ENCODE measurements at regions of chr17 and their contacts with region 1.

Region 1: GRCh38 chr17:38421171-38421841 is 7.0 kb upstream of the ARHGAP23 start:
- DNase-seq: no peak
- ATAC-seq: peak; percentile 11

Region 2: DNA sequence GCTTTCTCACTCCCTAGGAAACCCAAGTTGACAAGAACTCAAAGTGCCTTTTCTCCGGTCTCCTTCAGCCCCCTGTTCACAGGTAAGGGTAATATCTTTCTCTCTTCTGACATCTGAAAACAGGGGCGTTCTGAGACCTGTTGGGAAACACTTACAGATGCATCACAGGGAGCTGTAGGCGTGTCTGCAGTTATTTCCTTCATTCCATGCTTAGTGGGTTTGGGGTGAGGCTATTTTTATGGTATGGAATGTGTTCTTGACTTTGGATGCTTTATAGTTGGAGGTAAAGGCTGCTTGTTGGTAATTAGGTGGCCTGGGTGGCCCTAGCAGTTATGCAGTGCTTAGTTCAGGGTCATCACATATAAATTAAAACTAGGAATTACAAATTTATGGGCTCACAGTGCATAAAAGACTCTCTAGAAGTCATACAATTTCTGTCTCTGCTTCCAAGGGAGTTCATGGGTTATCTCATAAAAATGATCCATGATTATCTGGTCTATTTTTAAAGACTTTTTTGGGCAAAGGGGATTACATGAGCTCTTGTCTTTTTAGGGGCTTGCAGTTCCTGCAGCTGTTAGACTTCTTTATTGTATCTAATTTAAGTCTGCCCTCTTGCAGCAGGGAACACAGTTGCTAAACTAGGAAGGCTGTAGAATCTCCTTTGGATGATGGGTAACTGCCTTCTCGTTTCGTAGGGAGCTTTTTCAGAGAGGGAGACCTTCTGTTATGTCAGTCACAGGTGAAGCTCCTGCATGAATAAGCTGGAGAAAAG is 59.4 kb before region 1 on chr17:
- intact Hi-C with region 1: no loop called
- DNase-seq: no peak
- ATAC-seq: no peak

Region 3: GRCh38 chr17:38485146-38485468 is 63.8 kb after region 1 on chr17:
- intact Hi-C with region 1: loop called (anchors 5 kb)
- DNase-seq: no peak
- ATAC-seq: no peak

Measured in left ventricle myocardium superior (tissue), 1 donor.